H1 (cell line): ENCODE measurements at regions of chr12 and their contacts with region 1.

Region 1: DNA sequence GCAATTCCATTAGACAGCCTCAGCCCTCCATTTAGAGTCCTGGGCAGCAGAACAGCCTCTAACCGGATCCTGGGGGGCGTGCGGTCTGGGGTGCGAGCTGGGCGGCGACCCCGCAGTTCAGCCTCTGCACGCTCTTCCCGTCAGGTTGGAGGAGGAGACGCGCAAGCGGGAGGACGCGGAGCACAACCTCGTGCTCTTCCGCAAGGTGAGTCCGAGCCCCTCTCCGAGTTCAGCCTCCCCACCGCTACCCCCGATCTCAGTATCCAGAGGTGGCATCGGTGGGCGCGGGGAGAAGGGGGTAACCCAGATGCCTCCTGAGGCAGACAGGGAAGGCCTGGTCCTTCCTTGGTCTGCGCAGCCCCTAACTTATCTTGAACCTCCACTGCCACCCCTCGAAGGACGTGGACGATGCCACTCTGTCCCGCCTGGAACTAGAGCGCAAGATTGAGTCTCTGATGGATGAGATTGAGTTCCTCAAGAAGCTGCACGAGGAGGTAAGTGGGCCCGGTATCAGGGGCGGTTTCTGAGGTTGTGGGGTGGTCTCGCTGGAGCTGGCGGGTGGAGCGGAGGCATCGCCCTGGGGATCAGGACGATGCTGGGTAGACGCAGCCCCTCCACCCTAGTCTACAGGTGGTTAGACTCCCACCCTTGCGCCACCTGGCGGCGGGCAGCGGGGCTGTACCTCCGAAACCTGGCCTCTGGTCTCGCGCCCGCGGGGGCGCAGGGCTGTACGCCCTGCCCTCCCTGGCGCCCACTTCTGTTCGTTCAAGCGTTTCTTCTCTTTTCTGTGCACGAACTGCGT is 1.3 kb downstream of the PRPH start:
- DNase-seq: peak in 1 of 2 experiments; percentile 91
- H3K4me3 ChIP-seq: peak overlapping the region; percentile 4 to 59 (median 34); a peak in 7 of 8 replicates
- H3K27ac ChIP-seq: no peak overlapping the region
- H3K4me1 ChIP-seq: peaks cover 0 to 36% (median 17%) of the 10 kb centered on the region in 4 experiments; a peak in 6 of 7 replicates
- H3K27me3 ChIP-seq: peaks cover 50 to 72% (median 68%) of the 10 kb centered on the region in 4 experiments
- CTCF ChIP-seq: peak in 2 of 3 experiments; percentile 89; a peak in 3 of 4 replicates
- EP300 ChIP-seq: no peak
- POLR2A ChIP-seq: no peak
- RAD21 ChIP-seq: peak; percentile 31 to 42; a peak in 2 of 4 replicates

Region 2: GRCh38 chr12:48765753-48766162 is 530.5 kb before region 1 on chr12:
- CTCF ChIA-PET with region 1: no interaction called
- POLR2A ChIA-PET with region 1: no interaction called
- DNase-seq: no peak
- H3K4me3 ChIP-seq: no peak overlapping the region
- H3K27ac ChIP-seq: no peak overlapping the region
- H3K4me1 ChIP-seq: peaks cover 0 to 14% (median 9%) of the 10 kb centered on the region in 4 experiments; a peak in 6 of 7 replicates
- H3K27me3 ChIP-seq: no peaks in the 10 kb centered on the region
- CTCF ChIP-seq: no peak
- EP300 ChIP-seq: no peak
- POLR2A ChIP-seq: no peak
- RAD21 ChIP-seq: no peak

Region 3: DNA sequence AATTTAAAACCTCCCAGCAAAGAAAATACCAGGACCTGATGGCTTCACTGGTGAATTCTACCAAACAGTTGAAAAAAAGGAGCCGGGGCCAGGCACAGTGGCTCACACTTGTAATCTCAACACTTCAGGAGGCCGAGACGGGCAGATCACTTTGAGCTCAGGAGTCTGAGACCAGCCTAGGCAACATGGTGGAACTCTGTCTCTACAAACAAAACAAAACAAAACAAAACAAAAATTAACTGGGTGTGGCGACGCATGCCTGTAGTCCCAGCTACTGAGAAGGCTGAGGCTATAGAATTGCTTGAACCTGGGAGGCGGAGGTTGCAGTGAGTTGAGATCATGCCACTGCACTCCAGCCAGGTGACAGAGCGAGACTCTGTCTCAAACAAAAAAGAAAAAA is 13.2 kb after region 1 on chr12:
- CTCF ChIA-PET with region 1: interaction called, 30 read pairs
- POLR2A ChIA-PET with region 1: no interaction called
- DNase-seq: no peak
- H3K4me3 ChIP-seq: no peak overlapping the region
- H3K27ac ChIP-seq: no peak overlapping the region
- H3K4me1 ChIP-seq: no peaks in the 10 kb centered on the region
- H3K27me3 ChIP-seq: no peaks in the 10 kb centered on the region; a peak in 2 of 7 replicates
- CTCF ChIP-seq: no peak
- EP300 ChIP-seq: no peak
- POLR2A ChIP-seq: no peak
- RAD21 ChIP-seq: no peak

Region 4: GRCh38 chr12:49322708-49323523 is 26.7 kb after region 1 on chr12 and contains the start of gene TROAP:
- CTCF ChIA-PET with region 1: interaction called, 276 read pairs
- POLR2A ChIA-PET with region 1: interaction called, 11 read pairs
- DNase-seq: peak; percentile 94 to 95
- H3K4me3 ChIP-seq: peak within 1 kb of the TSS; percentile 87 to 96 (median 90)
- H3K27ac ChIP-seq: peak within 1 kb of the TSS; percentile 66
- H3K4me1 ChIP-seq: peaks cover 4 to 13% (median 6%) of the 10 kb centered on the region in 4 experiments; a peak in 6 of 7 replicates
- H3K27me3 ChIP-seq: no peaks in the 10 kb centered on the region
- CTCF ChIP-seq: no peak
- EP300 ChIP-seq: no peak
- POLR2A ChIP-seq: peak in 1 of 2 experiments; percentile 70; a peak in 2 of 3 replicates
- RAD21 ChIP-seq: no peak
- total RNA-seq, gene TROAP: 52.0 and 54.0 TPM in 2 replicates

Region 5: DNA sequence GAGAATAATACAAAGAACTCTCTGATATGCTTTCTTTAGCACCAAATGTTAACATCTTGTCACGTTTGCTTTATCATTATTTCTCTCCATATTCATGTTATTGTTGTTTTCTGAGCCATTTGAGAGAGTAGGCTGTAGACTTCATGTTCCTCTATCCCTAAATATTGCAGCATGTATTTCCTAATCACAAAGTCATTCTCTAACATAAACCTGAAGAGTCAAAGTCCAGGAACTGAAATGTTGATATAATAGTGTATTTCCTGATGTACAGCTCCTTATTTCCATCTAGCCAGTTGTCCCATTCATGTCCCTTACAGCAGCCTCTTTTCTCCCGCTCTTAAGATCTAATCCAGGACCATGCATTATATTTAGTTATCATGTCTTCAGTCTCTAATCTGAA is 143.8 kb after region 1 on chr12:
- CTCF ChIA-PET with region 1: no interaction called
- POLR2A ChIA-PET with region 1: no interaction called
- DNase-seq: no peak
- H3K4me3 ChIP-seq: no peak overlapping the region
- H3K27ac ChIP-seq: no peak overlapping the region
- H3K4me1 ChIP-seq: no peaks in the 10 kb centered on the region
- H3K27me3 ChIP-seq: peaks cover 0 to 1% (median 0%) of the 10 kb centered on the region in 4 experiments; a peak in 1 of 7 replicates
- CTCF ChIP-seq: no peak
- EP300 ChIP-seq: no peak
- POLR2A ChIP-seq: no peak
- RAD21 ChIP-seq: no peak